ENCODE measurements at regions of chr11 and their contacts with region 1.

Region 1: DNA sequence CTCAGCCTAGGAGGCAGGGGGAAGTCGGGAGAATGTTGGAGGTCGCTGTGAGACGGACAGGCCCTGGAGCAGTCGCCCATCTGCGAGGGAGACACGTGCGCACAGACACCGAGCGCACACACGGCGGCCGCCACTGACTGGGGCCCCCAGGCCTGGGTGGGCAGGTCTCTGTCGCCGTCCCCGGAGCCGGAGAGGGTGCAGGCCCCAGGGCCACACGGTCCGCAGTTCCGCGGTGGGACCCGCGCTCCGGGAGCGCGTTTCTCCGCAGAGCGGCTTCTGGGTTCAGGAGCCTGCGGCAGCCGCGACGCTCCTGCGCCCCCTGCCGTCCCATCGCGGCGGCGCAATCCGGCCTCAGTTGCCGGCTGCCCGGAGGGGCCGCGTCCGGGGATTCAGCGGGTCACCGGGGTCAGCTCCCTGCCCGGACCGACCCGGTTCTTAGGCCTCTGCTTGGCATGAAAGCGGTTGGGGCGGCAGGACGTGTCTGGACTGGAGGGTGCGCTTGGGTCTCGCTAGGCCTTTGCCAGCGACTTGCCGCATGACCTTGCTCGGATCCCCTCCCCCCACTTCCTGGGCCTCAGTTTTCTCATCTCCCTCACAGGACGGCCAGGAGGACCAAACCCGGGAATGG is 31.2 kb downstream of the PDE2A start:
- DNase-seq: peak; percentile 79
- ATAC-seq: peak; percentile 88
- H3K4me3 Mint-ChIP-seq: no peak overlapping the region
- H3K27ac Mint-ChIP-seq: no peak overlapping the region
- H3K4me1 Mint-ChIP-seq: no peaks in the 10 kb centered on the region
- H3K27me3 Mint-ChIP-seq: peaks cover 4% of the 10 kb centered on the region

Region 2: GRCh38 chr11:72668611-72669347 is 25.8 kb after region 1 on chr11:
- CTCF ChIA-PET with region 1: interaction called, 4 read pairs
- POLR2A ChIA-PET with region 1: no interaction called
- intact Hi-C with region 1: loop called in 1 of 2 experiments (anchors 1 kb)
- DNase-seq: peak; percentile 84
- ATAC-seq: peak; percentile 93
- H3K4me3 Mint-ChIP-seq: no peak overlapping the region
- H3K27ac Mint-ChIP-seq: no peak overlapping the region
- H3K4me1 Mint-ChIP-seq: peaks cover 11% of the 10 kb centered on the region
- H3K27me3 Mint-ChIP-seq: peaks cover 54% of the 10 kb centered on the region

Measured in activated CD4-positive, alpha-beta T cell treated with anti-CD3 and anti-CD28 coated beads for 36 hours (primary cell).